ENCODE measurements at regions of chr4 and their contacts with region 1.

Region 1: GRCh38 chr4:1899149-1900086 is 28.2 kb downstream of the NSD2 start:
- DNase-seq: peak; percentile 68
- H3K4me3 ChIP-seq: no peak overlapping the region
- H3K27ac ChIP-seq: no peak overlapping the region
- H3K4me1 ChIP-seq: no peaks in the 10 kb centered on the region
- H3K27me3 ChIP-seq: no peaks in the 10 kb centered on the region
- CTCF ChIP-seq: peak; percentile 79 to 94 (median 86)
- POLR2A ChIP-seq: no peak

Region 2: GRCh38 chr4:1809754-1810511 is 89.5 kb before region 1 on chr4:
- intact Hi-C with region 1: loop called (anchors 10 kb)
- DNase-seq: peak; percentile 54 to 56
- H3K4me3 ChIP-seq: no peak overlapping the region
- H3K27ac ChIP-seq: no peak overlapping the region
- H3K4me1 ChIP-seq: no peaks in the 10 kb centered on the region
- H3K27me3 ChIP-seq: no peaks in the 10 kb centered on the region
- CTCF ChIP-seq: peak; percentile 56 to 82 (median 70)
- POLR2A ChIP-seq: no peak